CD4-positive, alpha-beta memory T cell (primary cell): ENCODE measurements at regions of chr5 and their contacts with region 1.

Region 1: GRCh38 chr5:119328753-119329602 is 26.8 kb upstream of the TNFAIP8 start:
- DNase-seq: peak; percentile 56 to 89 (median 63)
- H3K4me3 ChIP-seq: peak overlapping the region; percentile 24 to 39
- H3K4me3 Mint-ChIP-seq: peak overlapping the region; percentile 70 to 89 (median 79)
- H3K27ac ChIP-seq: peak overlapping the region; percentile 75
- H3K27ac Mint-ChIP-seq: peak overlapping the region; percentile 93 to 97 (median 96)
- H3K4me1 ChIP-seq: peaks cover 91% of the 10 kb centered on the region
- H3K4me1 Mint-ChIP-seq: peaks cover 68 to 92% (median 78%) of the 10 kb centered on the region in 4 donors
- H3K27me3 ChIP-seq: no peaks in the 10 kb centered on the region
- H3K27me3 Mint-ChIP-seq: no peaks in the 10 kb centered on the region

Region 2: DNA sequence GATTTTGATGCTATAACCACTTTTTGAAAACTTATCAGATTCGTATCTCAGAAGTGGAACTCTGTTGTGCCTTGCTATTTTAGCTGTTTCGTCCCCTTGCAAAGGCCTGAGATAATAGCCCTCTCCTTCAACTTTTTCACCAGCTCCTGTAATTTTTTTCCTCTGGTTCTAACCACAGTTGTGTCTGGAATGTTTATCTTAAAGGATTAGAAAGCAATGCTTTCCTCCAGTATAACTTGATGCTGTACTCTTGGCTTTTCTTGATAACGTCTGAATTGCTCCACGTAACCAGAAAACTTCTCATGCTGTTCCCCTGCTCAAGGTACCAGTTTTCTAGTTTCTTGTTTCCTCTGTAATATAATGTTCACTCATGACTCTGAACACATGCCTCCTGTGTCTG is 550.0 kb before region 1 on chr5:
- CTCF ChIA-PET with region 1: no interaction called
- POLR2A ChIA-PET with region 1: no interaction called
- intact Hi-C with region 1: no loop called
- DNase-seq: no peak
- H3K4me3 ChIP-seq: no peak overlapping the region
- H3K4me3 Mint-ChIP-seq: no peak overlapping the region
- H3K27ac ChIP-seq: no peak overlapping the region
- H3K27ac Mint-ChIP-seq: no peak overlapping the region
- H3K4me1 ChIP-seq: no peaks in the 10 kb centered on the region
- H3K4me1 Mint-ChIP-seq: no peaks in the 10 kb centered on the region
- H3K27me3 ChIP-seq: no peaks in the 10 kb centered on the region
- H3K27me3 Mint-ChIP-seq: peaks cover 0 to 1% of the 10 kb centered on the region in 2 donors

Region 3: GRCh38 chr5:119179857-119180641 is 148.9 kb before region 1 on chr5:
- CTCF ChIA-PET with region 1: no interaction called
- POLR2A ChIA-PET with region 1: no interaction called
- intact Hi-C with region 1: no loop called
- DNase-seq: no peak
- H3K4me3 ChIP-seq: no peak overlapping the region
- H3K4me3 Mint-ChIP-seq: no peak overlapping the region
- H3K27ac ChIP-seq: no peak overlapping the region
- H3K27ac Mint-ChIP-seq: no peak overlapping the region
- H3K4me1 ChIP-seq: no peaks in the 10 kb centered on the region
- H3K4me1 Mint-ChIP-seq: no peaks in the 10 kb centered on the region
- H3K27me3 ChIP-seq: no peaks in the 10 kb centered on the region
- H3K27me3 Mint-ChIP-seq: no peaks in the 10 kb centered on the region

Region 4: DNA sequence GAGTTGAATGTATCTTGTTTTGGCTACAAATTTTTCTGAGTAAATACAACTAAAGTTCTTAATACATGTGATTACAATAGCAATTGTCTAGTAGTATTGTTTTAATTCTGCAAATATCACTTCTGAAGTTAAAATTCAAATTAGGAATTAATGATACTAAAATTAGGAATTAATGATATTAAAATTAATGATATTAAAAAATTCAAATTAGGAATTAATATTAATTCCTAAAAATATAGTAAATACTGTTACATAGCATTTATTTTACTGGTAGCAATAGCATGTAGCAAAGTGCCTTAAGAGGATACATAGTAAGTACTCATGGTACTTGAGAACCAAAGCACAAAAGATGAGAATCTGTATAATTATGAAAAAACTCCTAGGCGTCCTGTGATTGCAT is 121.9 kb before region 1 on chr5:
- CTCF ChIA-PET with region 1: no interaction called
- POLR2A ChIA-PET with region 1: no interaction called
- intact Hi-C with region 1: no loop called
- DNase-seq: no peak
- H3K4me3 ChIP-seq: no peak overlapping the region
- H3K4me3 Mint-ChIP-seq: no peak overlapping the region
- H3K27ac ChIP-seq: no peak overlapping the region
- H3K27ac Mint-ChIP-seq: no peak overlapping the region
- H3K4me1 ChIP-seq: no peaks in the 10 kb centered on the region
- H3K4me1 Mint-ChIP-seq: peaks cover 0 to 1% (median under 1%) of the 10 kb centered on the region in 4 donors
- H3K27me3 ChIP-seq: no peaks in the 10 kb centered on the region
- H3K27me3 Mint-ChIP-seq: no peaks in the 10 kb centered on the region

Region 5: GRCh38 chr5:119290161-119290569 is 38.8 kb before region 1 on chr5:
- CTCF ChIA-PET with region 1: interaction called, 12 read pairs
- POLR2A ChIA-PET with region 1: interaction called, 15 read pairs
- intact Hi-C with region 1: no loop called
- DNase-seq: no peak
- H3K4me3 ChIP-seq: peak overlapping the region in 1 of 2 donors; percentile 38
- H3K4me3 Mint-ChIP-seq: peak overlapping the region; percentile 71 to 92 (median 84)
- H3K27ac ChIP-seq: peak overlapping the region; percentile 88
- H3K27ac Mint-ChIP-seq: peak overlapping the region; percentile 91 to 99 (median 97)
- H3K4me1 ChIP-seq: peaks cover 82% of the 10 kb centered on the region
- H3K4me1 Mint-ChIP-seq: peaks cover 67 to 93% (median 83%) of the 10 kb centered on the region in 4 donors
- H3K27me3 ChIP-seq: no peaks in the 10 kb centered on the region
- H3K27me3 Mint-ChIP-seq: no peaks in the 10 kb centered on the region

Region 6: DNA sequence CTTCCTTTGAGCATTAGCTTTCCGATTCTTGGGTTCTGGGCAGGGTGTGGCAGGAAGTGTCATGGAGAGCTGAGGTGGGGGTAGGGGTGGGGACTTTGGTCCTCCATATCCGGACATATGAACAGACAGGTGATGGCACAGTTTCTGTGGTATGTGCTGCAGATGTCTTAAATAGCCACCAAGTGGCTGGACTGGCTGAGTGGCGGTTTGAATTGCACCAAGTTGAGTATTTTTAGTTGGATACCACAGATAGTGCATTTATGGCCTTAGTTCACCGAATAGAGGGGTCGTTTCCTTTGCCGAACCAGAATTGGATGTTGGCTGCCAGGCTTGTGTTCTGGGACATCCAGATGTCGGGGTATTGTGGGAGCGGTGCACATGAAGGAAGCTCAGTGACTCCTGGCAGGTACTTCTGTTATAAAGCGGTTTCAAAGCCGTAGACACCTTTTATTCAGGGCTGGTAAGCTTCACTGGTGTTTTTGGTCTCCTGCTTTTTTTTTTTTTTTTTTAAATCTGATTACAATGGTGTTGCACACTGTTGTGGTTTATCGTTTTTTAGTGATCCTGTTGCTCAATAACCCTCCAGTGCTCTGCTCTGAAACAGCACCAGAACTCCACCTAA is 11.7 kb after region 1 on chr5:
- CTCF ChIA-PET with region 1: interaction called, 52 read pairs
- POLR2A ChIA-PET with region 1: interaction called, 204 read pairs
- intact Hi-C with region 1: loop called (anchors 1 kb)
- DNase-seq: peak; percentile 71 to 85 (median 77)
- H3K4me3 ChIP-seq: peak overlapping the region; percentile 40 to 63
- H3K4me3 Mint-ChIP-seq: peak overlapping the region; percentile 80 to 89 (median 86)
- H3K27ac ChIP-seq: peak overlapping the region; percentile 75
- H3K27ac Mint-ChIP-seq: peak overlapping the region; percentile 89 to 97 (median 92)
- H3K4me1 ChIP-seq: peaks cover 99% of the 10 kb centered on the region
- H3K4me1 Mint-ChIP-seq: peaks cover 81 to 97% (median 89%) of the 10 kb centered on the region in 4 donors
- H3K27me3 ChIP-seq: no peaks in the 10 kb centered on the region
- H3K27me3 Mint-ChIP-seq: no peaks in the 10 kb centered on the region

Region 7: DNA sequence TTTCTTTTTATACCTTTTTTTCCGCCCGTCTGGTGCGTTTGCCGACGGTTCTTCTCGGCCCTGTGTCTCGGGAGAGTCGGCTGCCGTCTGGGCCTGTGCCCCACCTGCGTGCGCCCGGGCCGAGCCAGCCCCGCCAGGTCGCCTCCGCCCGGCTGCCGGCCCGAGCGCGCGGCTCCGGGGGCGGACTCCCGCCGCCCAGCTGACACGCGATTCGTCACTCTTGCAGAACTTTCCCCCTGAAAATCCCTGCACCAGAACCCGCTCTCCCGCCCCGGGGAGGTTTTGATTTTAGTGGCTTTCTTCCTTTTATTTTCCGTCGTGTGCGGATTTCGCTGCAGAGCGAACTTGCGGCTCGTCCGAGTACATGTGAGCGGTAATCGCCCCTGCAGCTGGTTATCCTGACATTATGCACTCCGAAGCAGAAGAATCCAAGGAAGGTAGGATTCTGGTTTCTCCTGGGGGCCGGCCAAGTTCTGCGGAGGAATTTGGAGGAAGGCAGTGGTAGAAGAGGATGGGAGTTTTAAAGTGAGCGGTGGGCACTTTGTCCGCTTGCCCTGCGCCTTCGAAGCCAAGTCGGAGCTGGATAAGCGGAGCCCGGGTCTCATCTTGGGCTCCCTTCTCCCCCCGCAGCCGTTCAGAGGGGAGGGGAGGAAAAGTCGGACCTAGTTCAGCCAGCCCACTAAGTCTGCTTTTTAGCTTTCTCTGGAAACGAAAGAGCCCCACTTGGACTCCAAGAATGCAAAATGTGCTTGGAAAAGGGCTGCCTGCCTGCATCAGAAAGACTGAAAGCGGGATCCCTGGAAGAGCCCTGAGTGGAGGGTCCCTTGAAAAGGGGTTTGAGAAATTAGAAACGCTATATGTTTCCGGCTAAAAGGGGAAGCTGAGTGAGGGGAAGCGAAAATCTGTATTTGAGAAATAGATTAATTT is 27.0 kb after region 1 on chr5 and contains the start of gene TNFAIP8:
- CTCF ChIA-PET with region 1: interaction called, 19 read pairs
- POLR2A ChIA-PET with region 1: interaction called, 727 read pairs
- intact Hi-C with region 1: no loop called
- DNase-seq: peak in 2 of 5 donors; percentile 12 to 75
- H3K4me3 ChIP-seq: peak within 1 kb of the TSS; percentile 51 to 55
- H3K4me3 Mint-ChIP-seq: peak within 1 kb of the TSS; percentile 82 to 97 (median 90)
- H3K27ac ChIP-seq: peak within 1 kb of the TSS; percentile 78
- H3K27ac Mint-ChIP-seq: peak within 1 kb of the TSS; percentile 86 to 97 (median 93)
- H3K4me1 ChIP-seq: peaks cover 93% of the 10 kb centered on the region
- H3K4me1 Mint-ChIP-seq: peaks cover 75 to 95% (median 86%) of the 10 kb centered on the region in 4 donors
- H3K27me3 ChIP-seq: no peaks in the 10 kb centered on the region
- H3K27me3 Mint-ChIP-seq: no peaks in the 10 kb centered on the region
- total RNA-seq, gene TNFAIP8: 167 to 176 TPM

Region 8: GRCh38 chr5:119367502-119368237 is 38.7 kb after region 1 on chr5:
- CTCF ChIA-PET with region 1: interaction called, 3 read pairs
- POLR2A ChIA-PET with region 1: interaction called, 727 read pairs
- intact Hi-C with region 1: loop called (anchors 2 kb)
- DNase-seq: peak in 1 of 5 donors; percentile 71
- H3K4me3 ChIP-seq: peak overlapping the region in 1 of 2 donors; percentile 28
- H3K4me3 Mint-ChIP-seq: peak overlapping the region in 7 of 8 donors; percentile 61 to 83 (median 68)
- H3K27ac ChIP-seq: peak overlapping the region; percentile 62
- H3K27ac Mint-ChIP-seq: peak overlapping the region; percentile 85 to 91 (median 88)
- H3K4me1 ChIP-seq: peaks cover 87% of the 10 kb centered on the region
- H3K4me1 Mint-ChIP-seq: peaks cover 70 to 87% (median 79%) of the 10 kb centered on the region in 4 donors
- H3K27me3 ChIP-seq: no peaks in the 10 kb centered on the region
- H3K27me3 Mint-ChIP-seq: no peaks in the 10 kb centered on the region